ENCODE measurements at regions of chr5 and their contacts with region 1.

Region 1: DNA sequence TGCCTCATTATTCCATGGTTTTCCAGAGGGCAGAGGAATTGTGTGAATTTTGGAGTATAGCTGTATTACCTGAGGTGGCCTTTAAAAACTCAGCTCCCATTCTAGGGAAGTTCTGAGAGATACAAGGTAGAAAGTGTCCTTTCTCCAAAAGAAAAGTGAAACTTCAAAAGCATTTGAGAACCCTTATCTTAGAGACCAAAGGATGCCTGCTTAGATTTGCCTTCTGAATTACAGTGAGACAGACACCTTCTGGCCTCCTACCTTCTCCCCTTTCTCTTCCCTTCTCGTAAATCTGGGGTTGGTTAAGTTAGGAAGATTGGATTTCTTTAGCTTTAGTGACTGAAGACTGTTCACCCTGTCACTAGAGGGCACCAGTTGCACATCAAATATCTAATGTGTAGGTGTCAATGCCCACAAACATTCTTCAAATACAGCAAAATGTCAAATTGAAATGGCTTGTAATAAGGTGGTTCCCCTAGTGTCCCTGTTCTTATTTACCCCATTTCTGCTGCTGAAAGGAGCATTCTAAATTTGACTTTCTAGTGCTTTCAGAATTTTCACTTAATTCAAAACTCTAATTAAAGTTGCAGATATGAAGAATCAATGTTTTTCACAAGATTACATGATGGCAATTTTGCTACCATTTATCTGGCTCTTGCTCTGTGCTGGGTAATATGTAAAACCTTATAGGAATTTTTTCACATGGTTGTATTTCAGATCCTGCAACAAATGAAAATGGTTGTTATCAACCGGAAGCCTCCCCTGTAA is 46.7 kb downstream of the PRRC1 start:
- DNase-seq: peak in 3 of 5 donors; percentile 25 to 42 (median 35)
- ATAC-seq: peak in 3 of 4 donors; percentile 55 to 74 (median 57)
- H3K4me3 ChIP-seq: no peak overlapping the region
- H3K27ac ChIP-seq: no peak overlapping the region
- H3K4me1 ChIP-seq: peaks cover 0 to 7% (median 0%) of the 10 kb centered on the region in 12 donors
- H3K27me3 ChIP-seq: peaks cover 0 to 3% (median 0%) of the 10 kb centered on the region in 9 donors
- CTCF ChIP-seq: peak; percentile 55 to 76 (median 66)
- POLR2A ChIP-seq: no peak

Region 2: GRCh38 chr5:127373858-127374491 is 190.2 kb before region 1 on chr5:
- intact Hi-C with region 1: no loop called
- DNase-seq: no peak
- ATAC-seq: no peak
- H3K4me3 ChIP-seq: no peak overlapping the region
- H3K27ac ChIP-seq: no peak overlapping the region
- H3K4me1 ChIP-seq: no peaks in the 10 kb centered on the region
- H3K27me3 ChIP-seq: peaks cover 0 to 4% (median 0%) of the 10 kb centered on the region in 9 donors
- CTCF ChIP-seq: peak in 4 of 12 donors; percentile 17 to 39 (median 26)
- POLR2A ChIP-seq: no peak

Region 3: DNA sequence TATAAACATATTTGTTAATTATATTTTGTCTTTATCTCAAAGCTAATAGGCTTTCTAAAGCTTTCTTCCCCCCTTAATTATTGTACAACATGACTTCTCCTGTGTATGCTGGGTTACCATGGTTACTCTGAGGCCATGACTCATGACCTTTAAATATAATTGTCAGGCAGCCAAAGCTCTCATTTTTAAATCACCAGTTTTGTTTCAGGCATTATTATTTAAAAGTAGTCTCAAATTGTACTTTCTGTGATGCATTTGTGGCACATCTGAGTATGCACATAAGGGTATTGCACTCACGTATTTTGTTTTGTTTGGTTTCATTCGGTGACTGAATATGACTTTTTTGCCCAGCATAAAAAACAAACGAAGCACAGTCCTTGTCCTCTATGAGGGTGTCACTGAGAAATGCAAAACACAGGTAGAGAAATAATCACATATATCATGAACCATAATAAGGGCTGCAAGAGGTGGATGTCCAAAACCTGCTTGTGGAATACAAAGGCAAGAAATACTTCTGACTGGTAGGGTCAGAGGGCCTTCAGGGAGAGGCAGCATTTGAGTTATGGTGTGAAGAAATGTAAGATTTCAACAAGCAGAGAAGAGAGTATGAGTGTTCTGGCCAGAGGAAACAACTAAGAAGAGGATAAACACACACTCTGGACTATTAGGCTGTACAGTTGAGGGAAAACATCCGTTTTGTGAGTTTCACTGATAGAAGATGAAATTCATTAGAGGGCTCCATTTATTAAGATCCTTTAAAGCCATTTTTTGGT is 141.1 kb after region 1 on chr5:
- intact Hi-C with region 1: loop called in 1 of 10 experiments (anchors 10 kb)
- DNase-seq: no peak
- ATAC-seq: peak in 2 of 4 donors; percentile 40 to 53
- H3K4me3 ChIP-seq: no peak overlapping the region
- H3K27ac ChIP-seq: peak overlapping the region in 8 of 12 donors; percentile 3 to 42 (median 18)
- H3K4me1 ChIP-seq: peaks cover 0 to 49% (median 13%) of the 10 kb centered on the region in 12 donors
- H3K27me3 ChIP-seq: no peaks in the 10 kb centered on the region
- CTCF ChIP-seq: no peak
- POLR2A ChIP-seq: no peak

Region 4: DNA sequence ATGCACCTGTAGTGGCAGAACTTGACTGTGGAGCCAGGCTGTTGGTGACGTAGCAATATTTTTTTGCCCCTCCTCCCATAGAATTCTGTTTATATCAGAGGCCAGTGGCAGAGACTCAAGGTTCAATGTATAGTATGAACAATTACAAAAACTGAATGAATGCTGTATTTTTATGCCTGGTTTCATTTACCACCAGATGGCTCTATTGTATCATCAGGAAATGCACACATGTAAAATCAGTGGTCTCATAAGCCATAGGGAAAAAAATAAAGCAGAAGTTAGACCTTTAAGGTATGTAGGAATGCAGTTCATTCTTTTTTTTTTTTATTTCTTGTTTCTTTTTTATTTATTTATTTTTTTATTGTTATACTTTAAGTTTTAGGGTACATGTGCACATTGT is 182.6 kb after region 1 on chr5:
- intact Hi-C with region 1: loop called in 5 of 10 experiments (anchors 10 kb)
- DNase-seq: no peak
- ATAC-seq: no peak
- H3K4me3 ChIP-seq: no peak overlapping the region
- H3K27ac ChIP-seq: no peak overlapping the region
- H3K4me1 ChIP-seq: no peaks in the 10 kb centered on the region
- H3K27me3 ChIP-seq: no peaks in the 10 kb centered on the region
- CTCF ChIP-seq: peak; percentile 33 to 64 (median 46)
- POLR2A ChIP-seq: no peak

Region 5: GRCh38 chr5:127766676-127767340 is 202.6 kb after region 1 on chr5:
- intact Hi-C with region 1: loop called in 2 of 10 experiments (anchors 10 kb)
- DNase-seq: no peak
- ATAC-seq: peak in 2 of 4 donors; percentile 27 to 42
- H3K4me3 ChIP-seq: no peak overlapping the region
- H3K27ac ChIP-seq: peak overlapping the region in 3 of 12 donors; percentile 1 to 51 (median 7)
- H3K4me1 ChIP-seq: peaks cover 0 to 23% (median 8%) of the 10 kb centered on the region in 12 donors
- H3K27me3 ChIP-seq: no peaks in the 10 kb centered on the region
- CTCF ChIP-seq: no peak
- POLR2A ChIP-seq: no peak

Region 6: GRCh38 chr5:127777957-127778356 is 213.8 kb after region 1 on chr5:
- intact Hi-C with region 1: no loop called
- DNase-seq: no peak
- ATAC-seq: no peak
- H3K4me3 ChIP-seq: no peak overlapping the region
- H3K27ac ChIP-seq: no peak overlapping the region
- H3K4me1 ChIP-seq: no peaks in the 10 kb centered on the region
- H3K27me3 ChIP-seq: no peaks in the 10 kb centered on the region
- CTCF ChIP-seq: no peak
- POLR2A ChIP-seq: no peak

Region 7: DNA sequence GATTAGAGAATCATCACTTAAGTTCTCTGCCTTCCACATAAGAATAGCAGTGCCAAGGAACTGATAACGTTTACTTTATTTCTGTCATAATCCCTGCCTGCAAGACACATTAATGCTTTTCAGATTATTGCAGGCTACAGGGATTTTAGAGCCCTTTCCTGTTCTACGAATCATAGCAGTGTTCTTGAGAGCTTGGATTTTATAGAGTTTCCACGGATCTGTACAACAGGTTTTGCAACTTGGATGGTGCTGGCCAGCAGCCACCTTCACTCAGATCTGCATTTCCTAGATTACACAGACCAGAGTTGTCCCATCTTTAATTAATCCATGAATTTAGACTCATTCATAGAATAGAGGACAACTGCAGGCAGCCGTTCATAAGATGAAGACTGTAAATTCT is 557.5 kb after region 1 on chr5:
- intact Hi-C with region 1: loop called in 1 of 10 experiments (anchors 10 kb)
- DNase-seq: no peak
- ATAC-seq: no peak
- H3K4me3 ChIP-seq: no peak overlapping the region
- H3K27ac ChIP-seq: no peak overlapping the region
- H3K4me1 ChIP-seq: peaks cover 0 to 4% (median 0%) of the 10 kb centered on the region in 12 donors
- H3K27me3 ChIP-seq: no peaks in the 10 kb centered on the region
- CTCF ChIP-seq: no peak
- POLR2A ChIP-seq: no peak

Region 8: GRCh38 chr5:128498844-128499455 is 934.8 kb after region 1 on chr5:
- intact Hi-C with region 1: loop called in 1 of 10 experiments (anchors 5 kb)
- DNase-seq: peak in 1 of 5 donors; percentile 17
- ATAC-seq: peak in 2 of 4 donors; percentile 50 to 61
- H3K4me3 ChIP-seq: no peak overlapping the region
- H3K27ac ChIP-seq: no peak overlapping the region
- H3K4me1 ChIP-seq: peaks cover 0 to 4% (median 0%) of the 10 kb centered on the region in 12 donors
- H3K27me3 ChIP-seq: no peaks in the 10 kb centered on the region
- CTCF ChIP-seq: peak; percentile 27 to 72 (median 58)
- POLR2A ChIP-seq: no peak